Activated B cell treated with CpG ODN at 0.5 μM for 24 hours (primary cell): ENCODE measurements at regions of chr2 and their contacts with region 1.

Region 1: GRCh38 chr2:73043929-73044832 is 27.3 kb downstream of the SFXN5 start:
- DNase-seq: no peak
- ATAC-seq: no peak
- H3K4me3 Mint-ChIP-seq: no peak overlapping the region
- H3K27ac Mint-ChIP-seq: no peak overlapping the region
- H3K4me1 Mint-ChIP-seq: no peaks in the 10 kb centered on the region
- H3K27me3 Mint-ChIP-seq: no peaks in the 10 kb centered on the region
- CTCF ChIP-seq: no peak

Region 2: GRCh38 chr2:73063909-73064875 is 20.0 kb after region 1 on chr2:
- CTCF ChIA-PET with region 1: no interaction called
- POLR2A ChIA-PET with region 1: no interaction called
- intact Hi-C with region 1: loop called (anchors 2 kb)
- DNase-seq: no peak
- ATAC-seq: no peak
- H3K4me3 Mint-ChIP-seq: no peak overlapping the region
- H3K27ac Mint-ChIP-seq: no peak overlapping the region
- H3K4me1 Mint-ChIP-seq: peaks cover 1% of the 10 kb centered on the region
- H3K27me3 Mint-ChIP-seq: no peaks in the 10 kb centered on the region
- CTCF ChIP-seq: no peak